Activated CD4-positive, alpha-beta T cell treated with anti-CD3 and anti-CD28 coated beads for 36 hours (primary cell): ENCODE measurements at regions of chr2 and their contacts with region 1.

Region 1: DNA sequence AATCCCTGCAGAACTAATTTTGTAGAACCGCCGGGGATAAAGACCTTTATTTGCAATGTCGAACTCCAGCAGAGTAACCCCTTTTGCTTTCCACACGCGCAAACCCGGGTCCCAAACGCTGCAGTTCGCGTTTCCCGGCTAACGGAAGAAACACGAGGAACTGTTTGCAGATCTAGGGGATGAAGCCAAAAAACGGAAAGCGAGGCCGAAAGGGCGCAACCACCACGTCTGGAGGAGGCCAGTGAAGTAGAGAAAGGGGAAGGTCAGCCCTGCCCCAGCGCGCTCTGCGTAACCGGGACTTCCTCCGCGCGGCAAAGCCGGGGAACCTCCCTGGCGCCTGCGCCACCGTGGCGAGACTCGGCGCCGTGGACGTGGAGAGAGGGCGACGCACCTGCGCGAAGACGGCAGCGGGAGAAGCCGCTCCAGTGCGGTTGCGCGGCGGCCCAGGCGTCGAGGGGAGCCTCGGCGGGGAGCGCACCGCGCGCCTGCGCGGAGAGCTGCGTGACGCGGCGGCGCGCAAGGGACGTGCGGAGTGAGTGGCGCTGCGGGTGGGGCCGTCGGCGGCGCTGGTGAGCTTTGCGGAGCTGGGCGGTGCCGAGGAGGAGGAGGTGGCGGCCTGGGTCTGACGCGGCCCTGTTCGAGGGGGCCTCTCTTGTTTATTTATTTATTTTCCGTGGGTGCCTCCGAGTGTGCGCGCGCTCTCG is at the start of gene PPP1CB:
- DNase-seq: peak; percentile 96
- ATAC-seq: peak; percentile 88
- H3K4me3 Mint-ChIP-seq: peak within 1 kb of the TSS; percentile 90
- H3K27ac Mint-ChIP-seq: peak within 1 kb of the TSS; percentile 95
- H3K4me1 Mint-ChIP-seq: peaks cover 53% of the 10 kb centered on the region
- H3K27me3 Mint-ChIP-seq: no peaks in the 10 kb centered on the region
- total RNA-seq, gene PPP1CB: 153 to 213 TPM

Region 2: GRCh38 chr2:27771548-27772335 is 979.7 kb before region 1 on chr2 and contains the start of gene MRPL33:
- CTCF ChIA-PET with region 1: no interaction called
- POLR2A ChIA-PET with region 1: no interaction called
- intact Hi-C with region 1: loop called in 1 of 2 experiments (anchors 2 kb)
- DNase-seq: peak; percentile 96
- ATAC-seq: peak; percentile 98
- H3K4me3 Mint-ChIP-seq: peak within 1 kb of the TSS; percentile 99
- H3K27ac Mint-ChIP-seq: peak within 1 kb of the TSS; percentile 99
- H3K4me1 Mint-ChIP-seq: peaks cover 42% of the 10 kb centered on the region
- H3K27me3 Mint-ChIP-seq: no peaks in the 10 kb centered on the region
- total RNA-seq, gene MRPL33: 44.7 to 68.0 TPM

Region 3: GRCh38 chr2:28621172-28622100 is 130.0 kb before region 1 on chr2:
- CTCF ChIA-PET with region 1: interaction called, 3 read pairs
- POLR2A ChIA-PET with region 1: interaction called, 3 read pairs
- intact Hi-C with region 1: loop called (anchors 1 to 2 kb)
- DNase-seq: peak; percentile 81
- ATAC-seq: peak; percentile 73
- H3K4me3 Mint-ChIP-seq: peak overlapping the region; percentile 49
- H3K27ac Mint-ChIP-seq: peak overlapping the region; percentile 96
- H3K4me1 Mint-ChIP-seq: peaks cover 95% of the 10 kb centered on the region
- H3K27me3 Mint-ChIP-seq: no peaks in the 10 kb centered on the region

Region 4: DNA sequence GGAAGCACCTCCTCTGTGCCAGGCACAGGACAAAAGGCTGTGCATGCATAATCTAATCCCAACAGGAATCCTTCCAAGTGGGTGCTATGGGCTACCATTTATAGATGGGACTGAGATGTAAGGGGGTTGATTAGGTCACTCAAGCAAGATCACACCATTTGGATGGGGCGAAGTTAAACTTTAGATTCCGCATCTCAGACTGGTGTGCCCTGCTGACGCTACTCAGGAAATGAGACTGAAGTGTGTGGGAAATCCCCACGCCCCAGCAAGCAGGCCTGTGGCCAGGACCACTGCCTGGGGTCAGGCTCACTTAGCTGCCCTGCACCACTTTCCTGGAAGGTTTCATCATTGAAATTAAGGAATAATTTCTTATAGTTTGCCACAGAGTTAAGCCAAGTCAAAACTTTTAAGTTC is 70.2 kb before region 1 on chr2:
- CTCF ChIA-PET with region 1: no interaction called
- POLR2A ChIA-PET with region 1: no interaction called
- intact Hi-C with region 1: loop called in 1 of 2 experiments (anchors 1 kb)
- DNase-seq: peak; percentile 81
- ATAC-seq: peak; percentile 91
- H3K4me3 Mint-ChIP-seq: peak overlapping the region; percentile 20
- H3K27ac Mint-ChIP-seq: peak overlapping the region; percentile 91
- H3K4me1 Mint-ChIP-seq: peaks cover 41% of the 10 kb centered on the region
- H3K27me3 Mint-ChIP-seq: no peaks in the 10 kb centered on the region

Region 5: DNA sequence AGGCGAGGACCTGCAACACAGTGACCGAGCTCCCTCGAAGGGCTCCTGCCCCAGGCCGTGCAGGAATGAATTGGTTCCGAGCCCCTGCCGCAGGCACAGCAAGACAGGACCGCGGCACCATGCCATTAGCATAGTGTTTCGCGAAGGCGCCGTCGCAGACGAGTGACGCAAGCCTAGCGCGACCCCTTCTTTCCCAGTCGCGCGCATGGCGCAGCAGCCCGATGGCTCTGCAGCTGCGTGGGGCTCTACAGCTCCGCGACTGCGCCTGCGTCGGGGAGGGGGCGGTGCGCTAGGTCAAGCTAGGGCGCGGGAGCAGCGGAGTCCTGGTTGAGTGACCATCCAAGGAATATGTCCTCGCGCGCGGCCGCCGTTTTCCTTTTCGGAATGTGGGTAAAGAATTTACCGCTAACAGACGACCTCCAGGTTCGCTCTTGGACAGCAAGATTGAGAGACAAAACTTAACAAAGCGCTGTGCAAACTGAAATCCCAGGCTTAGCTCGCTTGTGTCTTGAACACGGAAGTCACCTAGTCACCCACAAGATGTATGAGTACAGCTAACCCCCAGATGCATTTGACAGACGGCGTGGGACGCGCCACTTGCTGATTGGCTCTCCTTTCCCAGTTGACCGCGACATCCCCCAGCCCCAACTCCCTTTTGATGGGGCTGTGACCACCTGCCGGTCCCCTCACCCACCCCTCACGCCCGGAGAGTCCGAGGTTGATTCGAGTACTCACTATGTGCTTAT is 118.9 kb after region 1 on chr2 and contains the start of gene TRMT61B:
- CTCF ChIA-PET with region 1: no interaction called
- POLR2A ChIA-PET with region 1: interaction called, 6 read pairs
- intact Hi-C with region 1: loop called in 1 of 2 experiments (anchors 1 kb)
- DNase-seq: peak; percentile 98
- ATAC-seq: peak; percentile 99
- H3K4me3 Mint-ChIP-seq: peak within 1 kb of the TSS; percentile 94
- H3K27ac Mint-ChIP-seq: peak within 1 kb of the TSS; percentile 97
- H3K4me1 Mint-ChIP-seq: peaks cover 25% of the 10 kb centered on the region
- H3K27me3 Mint-ChIP-seq: no peaks in the 10 kb centered on the region
- total RNA-seq, gene TRMT61B: 22.0 to 22.2 TPM

Region 6: GRCh38 chr2:29014811-29015421 is 263.5 kb after region 1 on chr2:
- CTCF ChIA-PET with region 1: no interaction called
- POLR2A ChIA-PET with region 1: no interaction called
- intact Hi-C with region 1: loop called in 1 of 2 experiments (anchors 5 kb)
- DNase-seq: peak; percentile 80
- ATAC-seq: peak; percentile 82
- H3K4me3 Mint-ChIP-seq: peak overlapping the region; percentile 75
- H3K27ac Mint-ChIP-seq: peak overlapping the region; percentile 94
- H3K4me1 Mint-ChIP-seq: peaks cover 78% of the 10 kb centered on the region
- H3K27me3 Mint-ChIP-seq: no peaks in the 10 kb centered on the region

Region 7: GRCh38 chr2:30231212-30231995 is 1480.0 kb after region 1 on chr2 and contains the start of gene LBH:
- CTCF ChIA-PET with region 1: no interaction called
- POLR2A ChIA-PET with region 1: no interaction called
- intact Hi-C with region 1: loop called in 1 of 2 experiments (anchors 10 kb)
- DNase-seq: peak; percentile 94
- ATAC-seq: peak; percentile 41
- H3K4me3 Mint-ChIP-seq: peak within 1 kb of the TSS; percentile 76
- H3K27ac Mint-ChIP-seq: peak within 1 kb of the TSS; percentile 93
- H3K4me1 Mint-ChIP-seq: peaks cover 65% of the 10 kb centered on the region
- H3K27me3 Mint-ChIP-seq: peaks cover 10% of the 10 kb centered on the region
- total RNA-seq, gene LBH: 89.6 to 108 TPM